PC-3 (cell line): ENCODE measurements at regions of chr1 and their contacts with region 1.

Region 1: DNA sequence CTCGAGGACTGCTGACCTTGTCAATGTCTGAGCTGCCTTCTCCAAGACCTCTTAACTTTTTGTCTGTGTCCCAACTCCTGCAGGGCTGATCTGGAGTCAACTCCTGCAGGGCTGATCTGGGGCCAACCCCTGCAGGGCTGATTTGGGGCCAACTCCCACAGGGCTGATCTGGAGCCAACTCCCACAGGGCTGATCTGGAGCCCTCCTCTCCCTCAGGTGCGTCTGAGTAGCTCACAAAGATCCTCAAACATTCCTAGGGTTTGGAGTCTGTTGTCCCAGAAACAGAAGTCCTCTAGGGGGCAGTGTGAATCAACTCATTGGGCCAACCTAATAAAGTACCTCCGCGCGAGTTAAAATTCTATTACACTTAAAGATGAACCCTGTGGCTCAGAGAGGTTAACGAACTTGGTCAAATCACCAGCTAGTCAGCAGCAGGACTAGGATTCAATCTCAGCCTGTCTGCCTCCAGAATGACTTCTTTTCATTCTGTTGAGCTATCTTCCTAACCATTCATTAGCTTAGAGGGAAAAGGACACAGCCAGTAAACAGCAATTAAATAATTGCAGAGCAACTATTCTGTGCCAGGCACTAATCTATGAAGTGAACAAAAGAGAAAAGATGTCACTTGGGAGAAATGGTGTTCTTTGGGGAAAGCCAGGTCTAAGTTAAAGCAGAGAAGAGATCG is 17.2 kb upstream of the RLF start:
- DNase-seq: peak; percentile 91
- ATAC-seq: peak; percentile 92
- H3K4me3 ChIP-seq: no peak overlapping the region
- H3K27ac ChIP-seq: no peak overlapping the region
- H3K4me1 ChIP-seq: peaks cover 31% of the 10 kb centered on the region
- H3K27me3 ChIP-seq: no peaks in the 10 kb centered on the region
- CTCF ChIP-seq: peak; percentile 88

Region 2: DNA sequence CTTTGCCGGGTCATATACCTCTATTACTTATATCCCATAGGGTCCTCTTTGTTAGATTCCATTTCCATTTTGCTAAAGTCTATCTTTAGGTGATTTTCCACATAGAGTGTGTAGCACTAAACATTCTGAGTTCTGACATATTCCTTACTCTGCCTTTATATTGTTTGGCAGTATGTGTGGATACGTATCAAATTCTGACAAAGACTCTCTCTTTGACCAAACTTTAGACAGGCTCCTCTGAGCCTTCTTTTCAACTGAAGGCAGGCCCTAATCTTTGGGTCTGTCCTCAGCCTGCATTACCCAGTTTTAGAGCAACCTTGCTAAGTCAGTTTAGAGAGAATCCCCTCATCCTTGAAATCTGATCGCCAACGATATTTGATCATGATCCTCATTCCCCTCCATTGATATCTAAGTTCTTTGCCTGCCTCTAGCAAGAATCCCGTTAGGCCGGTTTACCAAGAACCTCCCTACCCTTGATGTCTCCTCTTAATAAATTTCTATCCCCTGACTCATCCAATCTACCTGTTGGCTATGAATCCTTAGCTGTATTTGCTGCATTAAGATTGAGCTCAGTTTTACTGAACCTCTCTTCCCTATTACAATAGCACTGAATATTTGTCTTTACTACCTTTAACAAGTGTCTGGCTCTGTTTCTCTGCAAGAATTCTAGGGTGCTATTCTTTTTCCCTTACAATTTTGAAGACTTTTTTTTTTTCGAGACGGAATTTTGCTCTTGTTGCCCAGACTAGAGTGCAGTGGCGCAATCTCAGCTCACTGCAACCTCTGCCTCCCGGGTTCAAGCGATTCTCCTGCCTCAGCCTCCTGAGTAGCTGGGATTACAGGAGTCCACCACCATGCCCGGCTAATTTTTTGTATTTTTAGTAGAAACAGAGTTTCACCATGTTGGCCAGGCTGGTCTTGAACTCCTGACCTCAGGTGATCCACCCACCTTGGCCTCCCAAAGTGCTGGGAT is 36.5 kb before region 1 on chr1:
- CTCF ChIA-PET with region 1: interaction called, 7 read pairs
- POLR2A ChIA-PET with region 1: no interaction called
- intact Hi-C with region 1: loop called (anchors 5 kb)
- DNase-seq: peak; percentile 96
- ATAC-seq: peak; percentile 92
- H3K4me3 ChIP-seq: peak overlapping the region; percentile 47; the same call in 1 of the 2 replicates
- H3K27ac ChIP-seq: peak overlapping the region; percentile 51
- H3K4me1 ChIP-seq: peaks cover 18% of the 10 kb centered on the region
- H3K27me3 ChIP-seq: no peaks in the 10 kb centered on the region
- CTCF ChIP-seq: no peak

Region 3: GRCh38 chr1:40315239-40315794 is 171.3 kb after region 1 on chr1:
- CTCF ChIA-PET with region 1: interaction called, 4 read pairs
- POLR2A ChIA-PET with region 1: no interaction called
- intact Hi-C with region 1: loop called (anchors 5 kb)
- DNase-seq: peak; percentile 68
- ATAC-seq: peak; percentile 65
- H3K4me3 ChIP-seq: no peak overlapping the region
- H3K27ac ChIP-seq: no peak overlapping the region
- H3K4me1 ChIP-seq: no peaks in the 10 kb centered on the region
- H3K27me3 ChIP-seq: no peaks in the 10 kb centered on the region
- CTCF ChIP-seq: peak; percentile 78

Region 4: GRCh38 chr1:40392221-40392620 is 248.2 kb after region 1 on chr1:
- CTCF ChIA-PET with region 1: interaction called, 10 read pairs
- POLR2A ChIA-PET with region 1: no interaction called
- intact Hi-C with region 1: no loop called
- DNase-seq: peak; percentile 56
- ATAC-seq: peak; percentile 75
- H3K4me3 ChIP-seq: no peak overlapping the region
- H3K27ac ChIP-seq: no peak overlapping the region
- H3K4me1 ChIP-seq: peaks cover 18% of the 10 kb centered on the region; the same call in 1 of the 2 replicates
- H3K27me3 ChIP-seq: no peaks in the 10 kb centered on the region
- CTCF ChIP-seq: no peak